ENCODE measurements at regions of chr22 and their contacts with region 1.

Region 1: GRCh38 chr22:17057959-17058814 is 26.6 kb upstream of the IL17RA start:
- ATAC-seq: peak; percentile 36 to 98 (median 75)
- H3K4me3 ChIP-seq: no peak overlapping the region
- H3K27ac ChIP-seq: no peak overlapping the region
- H3K4me1 ChIP-seq: no peaks in the 10 kb centered on the region

Region 2: GRCh38 chr22:16917144-16918003 is 140.8 kb before region 1 on chr22:
- in situ Hi-C with region 1: loop called in 1 of 9 experiments (anchors 5 kb)
- ATAC-seq: peak in 3 of 8 experiments; percentile 83 to 91 (median 87)
- H3K4me3 ChIP-seq: no peak overlapping the region
- H3K27ac ChIP-seq: no peak overlapping the region
- H3K4me1 ChIP-seq: no peaks in the 10 kb centered on the region

Region 3: GRCh38 chr22:16932577-16932976 is 125.6 kb before region 1 on chr22:
- in situ Hi-C with region 1: loop called in 1 of 9 experiments (anchors 10 kb)
- ATAC-seq: peak in 3 of 8 experiments; percentile 47 to 82 (median 69)
- H3K4me3 ChIP-seq: no peak overlapping the region
- H3K27ac ChIP-seq: no peak overlapping the region
- H3K4me1 ChIP-seq: no peaks in the 10 kb centered on the region

Region 4: GRCh38 chr22:17121227-17122195 is 63.3 kb after region 1 on chr22 and contains the start of gene TMEM121B:
- in situ Hi-C with region 1: no loop called
- ATAC-seq: peak; percentile 86 to 93 (median 90)
- H3K4me3 ChIP-seq: peak within 1 kb of the TSS; percentile 61 to 74 (median 67)
- H3K27ac ChIP-seq: peak within 1 kb of the TSS; percentile 73 to 76
- H3K4me1 ChIP-seq: peaks cover 11 to 28% of the 10 kb centered on the region in 2 donors
- total RNA-seq, gene TMEM121B: 0.15 to 10.3 (median 4.9) TPM

Region 5: DNA sequence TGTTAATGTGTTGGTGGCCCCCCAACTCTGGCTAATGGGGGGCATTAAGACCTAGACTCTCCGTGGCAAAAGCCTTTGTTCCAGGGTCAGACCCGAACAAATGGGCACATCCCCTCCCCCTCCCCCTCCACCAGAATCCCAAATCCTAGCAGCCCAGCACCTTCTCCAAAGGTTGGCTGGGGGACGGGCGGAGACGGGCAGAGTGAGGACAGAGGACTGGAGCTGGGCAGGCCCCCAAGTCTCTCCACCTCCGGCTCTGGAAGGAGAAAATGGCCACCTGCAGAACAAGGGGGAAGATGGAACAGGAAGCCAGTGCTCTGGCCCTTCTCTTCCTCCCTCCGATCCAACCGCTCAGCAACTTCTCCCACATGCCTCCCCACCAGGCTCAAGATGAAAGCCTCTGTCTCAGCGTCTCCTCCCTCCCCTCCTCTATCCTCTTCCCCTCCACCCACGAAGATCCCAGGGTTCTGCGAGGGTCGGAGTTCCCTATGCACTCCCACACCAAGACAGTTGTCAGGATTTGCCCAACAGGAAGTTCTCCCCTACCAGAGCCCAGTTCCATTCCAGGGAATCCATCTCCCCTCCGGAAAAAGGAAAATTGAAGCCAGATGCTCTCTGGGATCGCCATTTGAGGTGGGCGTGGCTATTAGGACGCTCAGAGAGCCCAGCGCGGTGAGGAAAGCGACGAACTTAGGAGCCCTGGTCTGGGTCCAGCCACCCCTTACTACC is 141.0 kb after region 1 on chr22:
- in situ Hi-C with region 1: no loop called
- ATAC-seq: peak; percentile 51 to 80 (median 60)
- H3K4me3 ChIP-seq: peak overlapping the region; percentile 27 to 35 (median 31)
- H3K27ac ChIP-seq: peak overlapping the region; percentile 89 to 95
- H3K4me1 ChIP-seq: peaks cover 17 to 38% of the 10 kb centered on the region in 2 donors

Measured in motor neuron (in vitro differentiated cells).